Psoas muscle (tissue), 8 donors: ENCODE measurements at regions of chr21 and their contacts with region 1.

Region 1: GRCh38 chr21:31088315-31088714 is 50.0 kb upstream of the KRTAP19-8 start:
- DNase-seq: no peak
- ATAC-seq: no peak
- H3K4me3 ChIP-seq: no peak overlapping the region
- H3K27ac ChIP-seq: no peak overlapping the region
- H3K4me1 ChIP-seq: no peaks in the 10 kb centered on the region
- H3K27me3 ChIP-seq: no peaks in the 10 kb centered on the region
- CTCF ChIP-seq: no peak

Region 2: DNA sequence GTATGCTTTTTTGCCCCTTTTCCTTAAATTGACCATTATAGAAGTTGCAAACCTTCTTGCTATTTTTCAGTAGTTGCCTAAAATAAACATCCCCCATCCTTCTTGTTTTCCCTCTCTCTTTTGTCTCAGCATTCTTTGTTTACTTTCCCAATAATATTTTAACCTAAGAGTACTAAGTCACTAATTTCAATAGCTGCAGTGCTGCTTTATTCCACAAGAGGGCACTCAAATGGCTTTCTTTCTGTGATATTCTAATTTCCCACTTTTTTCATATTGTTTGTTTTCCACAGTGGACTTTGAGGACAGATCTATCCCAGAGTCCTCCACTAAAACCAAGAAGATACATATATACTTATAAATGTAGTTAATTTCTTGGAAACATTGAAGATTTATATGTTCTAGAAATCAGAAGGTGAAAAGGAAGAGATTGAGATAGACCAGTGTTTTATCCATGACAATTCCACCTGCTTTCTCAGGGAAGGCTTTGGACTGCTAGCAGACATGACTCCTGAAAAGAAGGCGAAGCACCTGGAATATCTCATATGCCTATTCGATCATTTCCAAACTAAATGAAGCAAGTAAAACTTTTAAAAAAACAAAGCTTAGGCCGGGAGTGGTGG is 1043.8 kb before region 1 on chr21:
- intact Hi-C with region 1: loop called in 1 of 2 experiments (anchors 10 kb)
- DNase-seq: no peak
- ATAC-seq: no peak
- H3K4me3 ChIP-seq: no peak overlapping the region
- H3K27ac ChIP-seq: no peak overlapping the region
- H3K4me1 ChIP-seq: no peaks in the 10 kb centered on the region
- H3K27me3 ChIP-seq: no peaks in the 10 kb centered on the region
- CTCF ChIP-seq: peak; percentile 58

Region 3: DNA sequence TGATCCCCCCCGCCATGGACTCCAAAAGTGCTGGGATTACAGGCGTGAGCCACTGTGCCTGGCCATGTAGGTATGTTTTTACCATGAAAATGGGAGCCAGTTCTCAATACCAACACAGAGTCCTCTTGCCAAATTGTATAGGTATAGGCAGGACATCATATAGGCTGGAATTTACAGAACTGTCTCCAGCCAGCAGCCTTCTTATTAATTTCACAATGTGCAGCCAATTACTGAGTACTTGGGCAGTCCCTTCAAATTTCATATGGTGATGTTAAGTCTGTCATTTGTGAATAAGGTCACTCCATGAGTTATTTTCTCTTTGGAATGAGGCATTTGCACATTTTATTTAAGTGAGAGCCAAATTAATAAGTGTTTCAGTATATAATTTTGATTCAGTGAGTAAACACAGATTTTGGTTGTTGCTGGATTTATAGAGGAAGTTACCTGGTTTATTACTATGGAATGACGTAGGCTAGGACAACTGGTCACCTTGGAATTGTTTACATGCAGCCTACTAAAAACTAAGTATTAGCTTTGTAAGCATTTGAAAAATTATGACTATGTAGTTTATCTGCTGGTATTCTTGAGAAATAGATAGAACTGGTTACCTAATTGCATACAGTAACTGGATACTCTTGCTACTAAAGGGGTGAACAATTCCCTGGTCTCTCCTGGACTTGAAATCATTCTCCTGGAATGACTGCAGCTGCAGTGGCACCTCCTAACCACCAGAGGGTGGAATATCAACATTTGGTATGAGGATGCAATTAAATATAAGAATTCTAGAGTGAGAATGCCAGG is 747.7 kb before region 1 on chr21:
- intact Hi-C with region 1: loop called (anchors 10 kb)
- DNase-seq: peak in 1 of 2 donors; percentile 13
- ATAC-seq: no peak
- H3K4me3 ChIP-seq: no peak overlapping the region
- H3K27ac ChIP-seq: no peak overlapping the region
- H3K4me1 ChIP-seq: no peaks in the 10 kb centered on the region
- H3K27me3 ChIP-seq: no peaks in the 10 kb centered on the region
- CTCF ChIP-seq: peak; percentile 53

Region 4: DNA sequence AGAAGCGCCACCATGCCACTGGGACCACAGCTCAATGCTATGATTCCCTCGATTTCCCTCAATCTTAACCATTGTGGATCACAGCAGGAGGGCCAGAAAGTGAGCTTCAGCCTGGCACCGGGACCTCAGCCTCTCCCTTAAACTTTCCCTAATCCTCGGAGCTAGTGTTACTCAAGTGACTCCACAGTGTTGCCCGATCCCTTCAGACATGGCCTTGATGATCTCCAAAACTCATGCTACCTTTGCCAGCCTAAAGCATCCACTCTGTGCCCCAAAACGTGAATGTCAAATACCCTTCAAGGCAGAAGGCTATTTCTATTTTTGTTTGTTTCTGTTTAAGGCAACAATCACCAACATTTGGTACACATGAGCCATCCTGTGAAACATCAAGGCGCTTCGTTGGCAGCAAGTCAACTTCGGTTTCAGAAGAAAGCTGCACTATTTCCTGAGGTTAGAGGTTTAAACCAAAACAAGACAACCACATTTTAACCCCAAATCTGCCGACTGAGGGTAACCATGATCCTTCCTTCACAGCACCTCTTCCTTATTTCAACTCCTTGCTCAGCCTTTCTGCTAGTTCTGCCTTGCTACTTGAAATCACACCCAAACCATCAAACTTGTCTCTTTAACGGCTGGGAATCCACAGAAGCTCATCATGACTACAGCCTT is 44.4 kb after region 1 on chr21:
- intact Hi-C with region 1: no loop called
- DNase-seq: no peak
- ATAC-seq: no peak
- H3K4me3 ChIP-seq: no peak overlapping the region
- H3K27ac ChIP-seq: no peak overlapping the region
- H3K4me1 ChIP-seq: no peaks in the 10 kb centered on the region
- H3K27me3 ChIP-seq: no peaks in the 10 kb centered on the region
- CTCF ChIP-seq: no peak